ENCODE measurements at regions of chr4 and their contacts with region 1.

Region 1: DNA sequence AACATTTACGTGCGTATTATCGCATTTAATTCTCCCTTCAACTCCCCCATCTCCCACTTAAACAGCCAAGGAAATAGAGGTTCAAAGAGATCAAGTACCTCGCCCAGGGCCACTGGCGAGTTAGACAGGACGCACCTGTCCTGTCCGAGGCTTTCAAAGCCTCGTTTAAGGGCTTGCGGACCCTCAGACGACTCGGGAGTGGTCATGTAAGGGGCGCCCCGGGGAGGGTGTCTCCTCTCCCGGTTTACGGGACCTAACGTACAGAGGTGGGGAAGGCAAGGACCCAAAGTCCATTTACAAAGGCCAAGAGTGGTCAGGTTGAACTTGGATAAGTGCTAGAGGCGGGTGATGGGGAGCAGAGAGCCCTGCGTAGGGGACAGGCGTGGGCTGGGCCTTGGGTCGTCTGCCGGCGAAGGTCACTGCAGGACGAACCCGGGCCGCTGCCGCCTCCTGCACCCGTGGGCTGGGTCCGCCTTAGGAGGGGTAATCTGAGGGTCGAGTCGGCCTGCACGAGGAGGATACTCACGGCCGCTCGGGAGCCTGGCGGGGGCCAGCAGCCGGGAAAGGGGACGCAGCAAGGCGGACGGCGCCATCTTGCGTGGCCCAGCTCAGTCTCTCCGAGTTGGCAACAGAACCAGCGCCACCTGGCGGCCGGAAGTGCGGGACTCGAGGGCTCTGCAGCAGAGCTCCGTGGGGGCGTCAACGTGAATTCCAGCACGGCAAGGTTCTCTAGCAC is 5.9 kb upstream of the NAA15 start:
- DNase-seq: no peak
- H3K4me3 ChIP-seq: peak overlapping the region; percentile 70
- H3K27me3 ChIP-seq: no peaks in the 10 kb centered on the region
- CTCF ChIP-seq: peak; percentile 97

Region 2: GRCh38 chr4:139229534-139230039 is 65.8 kb before region 1 on chr4:
- CTCF ChIA-PET with region 1: interaction called, 20 read pairs
- POLR2A ChIA-PET with region 1: no interaction called
- DNase-seq: no peak
- H3K4me3 ChIP-seq: no peak overlapping the region
- H3K27me3 ChIP-seq: no peaks in the 10 kb centered on the region
- CTCF ChIP-seq: peak; percentile 65

Region 3: DNA sequence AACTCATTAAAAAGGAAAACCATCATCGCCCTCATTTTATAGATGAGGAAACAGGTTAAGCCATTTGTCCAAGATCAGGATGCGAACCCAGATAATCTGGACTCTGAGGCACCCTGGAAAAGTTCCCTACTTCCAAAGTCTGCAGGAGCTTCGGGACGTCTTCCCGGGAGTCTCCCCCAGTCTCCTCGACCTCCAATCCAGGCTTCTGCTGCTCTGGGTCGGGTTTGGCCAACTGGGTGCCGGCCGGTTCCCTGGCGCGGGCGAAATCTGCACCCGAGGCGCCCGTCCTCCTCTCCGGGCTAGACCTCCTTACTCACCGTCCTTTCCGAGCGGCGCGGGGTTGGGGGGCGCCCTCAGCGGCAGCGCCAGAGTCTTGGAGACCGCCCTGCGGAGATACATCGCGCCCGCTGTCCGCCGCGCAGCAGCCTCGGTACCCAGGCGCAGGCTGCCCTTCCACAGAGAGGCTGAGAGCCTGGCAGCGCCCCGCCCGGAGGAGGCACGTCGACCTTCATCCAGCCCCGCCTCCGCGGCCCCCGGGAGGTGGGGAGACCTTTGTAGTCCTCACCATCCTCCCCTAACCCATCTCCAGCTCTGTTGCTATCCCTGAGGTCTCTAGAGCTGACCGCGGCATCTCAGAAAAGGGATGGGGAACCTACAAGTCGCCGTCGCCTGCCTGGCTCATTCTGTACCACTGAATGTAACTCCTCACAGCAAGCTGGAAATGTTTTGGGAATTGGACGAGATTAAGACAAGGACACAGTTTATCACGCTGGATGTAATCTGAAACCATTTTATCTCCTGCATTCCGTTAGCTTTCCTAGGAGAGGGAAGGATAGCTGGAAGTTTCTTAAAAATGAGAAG is 15.4 kb before region 1 on chr4 and contains the start of gene MGARP:
- CTCF ChIA-PET with region 1: interaction called, 19 read pairs
- POLR2A ChIA-PET with region 1: no interaction called
- DNase-seq: no peak
- H3K4me3 ChIP-seq: peak within 1 kb of the TSS; percentile 59
- H3K27me3 ChIP-seq: no peaks in the 10 kb centered on the region
- CTCF ChIP-seq: no peak
- polyA plus RNA-seq, gene MGARP: 24.2 and 29.5 TPM in 2 replicates

Region 4: DNA sequence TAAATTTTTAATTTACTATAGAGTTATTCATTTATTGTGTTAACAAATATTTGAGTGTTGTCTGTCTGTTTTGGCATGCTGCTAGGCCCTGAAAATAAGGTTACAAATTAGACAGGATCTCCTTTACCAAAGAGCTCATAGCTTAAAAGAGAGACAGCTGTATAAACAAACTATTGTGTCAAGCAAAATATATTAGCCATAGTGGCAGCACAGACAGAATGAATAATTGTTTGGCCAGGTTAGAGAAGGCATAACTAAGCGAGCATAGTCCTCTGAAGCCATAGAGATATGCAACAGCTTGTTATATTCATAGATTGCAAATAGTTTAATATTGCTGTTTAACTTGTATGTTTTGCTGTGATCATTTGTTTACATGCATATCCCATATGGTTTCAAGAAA is 73.6 kb after region 1 on chr4:
- CTCF ChIA-PET with region 1: no interaction called
- POLR2A ChIA-PET with region 1: interaction called, 23 read pairs
- DNase-seq: no peak
- H3K4me3 ChIP-seq: no peak overlapping the region
- H3K27me3 ChIP-seq: no peaks in the 10 kb centered on the region
- CTCF ChIP-seq: no peak

Measured in BJ (cell line).